Prostate gland (tissue), 2 donors: ENCODE measurements at regions of chrX and their contacts with region 1.

Region 1: DNA sequence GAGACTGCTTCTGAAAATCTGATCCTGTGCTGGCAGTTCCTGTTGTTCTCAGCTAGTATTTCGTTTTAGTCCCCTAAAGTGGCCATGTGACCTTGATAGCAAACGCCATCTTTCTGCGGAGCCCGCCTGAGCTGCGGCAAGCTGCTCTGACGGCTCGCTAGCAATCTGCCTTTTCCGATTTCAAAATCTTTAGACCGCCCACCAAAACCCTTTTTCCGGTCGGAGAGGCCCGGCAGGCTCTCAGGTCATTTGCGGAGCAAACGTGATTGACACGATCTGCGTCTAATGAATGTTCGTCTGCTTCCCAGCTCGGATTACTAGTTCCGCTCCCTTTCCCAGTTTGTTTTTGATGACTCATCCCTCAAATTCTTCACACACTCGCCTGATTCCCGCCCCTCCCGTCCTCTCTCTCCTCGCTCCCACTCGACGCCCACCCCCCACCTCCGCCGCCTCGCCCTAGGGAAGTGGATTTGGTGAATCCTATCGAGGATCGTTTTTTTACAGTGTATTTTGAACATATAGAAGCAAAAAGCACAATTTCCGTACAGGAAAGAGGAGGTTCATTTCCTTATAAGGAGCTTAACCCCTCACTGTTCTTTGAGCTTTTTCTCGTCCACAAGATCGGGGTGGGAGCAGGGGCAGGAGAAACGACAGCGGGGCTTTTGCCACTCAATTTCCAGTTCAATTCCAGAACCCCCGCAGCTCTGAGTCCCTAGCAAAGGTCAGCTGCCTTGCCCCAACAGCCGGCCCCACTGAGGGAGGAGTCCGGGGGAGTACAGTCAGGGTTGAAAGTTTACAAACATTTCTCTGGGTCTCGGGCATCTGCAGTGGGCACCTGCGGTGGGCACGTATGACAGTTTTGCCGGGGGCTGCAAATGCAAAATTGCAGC is 37.5 kb downstream of the NLGN3 start:
- DNase-seq: peak; percentile 88
- H3K4me3 ChIP-seq: peak overlapping the region; percentile 29 to 34
- H3K27ac ChIP-seq: peak overlapping the region; percentile 83 to 84
- H3K4me1 ChIP-seq: no peaks in the 10 kb centered on the region
- H3K27me3 ChIP-seq: no peaks in the 10 kb centered on the region
- CTCF ChIP-seq: no peak
- POLR2A ChIP-seq: peak; percentile 76

Region 2: DNA sequence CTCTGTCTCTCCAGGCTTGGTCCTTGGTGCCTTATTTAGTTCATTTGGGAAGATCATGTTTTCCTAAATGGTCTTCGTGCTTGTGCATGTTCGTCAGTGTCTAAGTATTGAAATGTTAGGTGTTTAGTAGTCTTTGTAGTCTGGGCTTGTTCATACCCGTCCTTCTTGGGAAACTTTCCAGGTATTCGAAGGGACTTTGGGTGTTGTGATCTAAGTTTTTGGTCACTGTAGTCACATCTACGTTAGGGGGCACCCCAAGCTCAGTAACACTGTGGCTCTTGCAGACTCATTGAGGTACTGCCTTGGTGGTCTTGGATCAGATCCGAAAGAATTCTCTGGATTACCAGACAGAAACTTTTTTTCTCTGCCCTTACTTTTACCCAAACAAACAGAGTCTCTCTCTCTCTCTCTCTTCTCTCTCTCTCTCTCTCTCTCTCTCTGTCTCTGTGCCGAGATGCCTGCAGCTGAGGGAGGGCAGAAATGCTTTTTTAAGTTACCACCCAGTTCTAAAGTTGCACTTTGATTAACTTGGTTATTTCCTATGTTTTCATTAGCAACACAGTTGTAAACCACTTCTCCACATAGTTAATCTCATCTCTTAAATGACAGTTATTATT is 183.6 kb before region 1 on chrX:
- intact Hi-C with region 1: loop called (anchors 5 kb)
- DNase-seq: peak; percentile 62
- H3K4me3 ChIP-seq: no peak overlapping the region
- H3K27ac ChIP-seq: no peak overlapping the region
- H3K4me1 ChIP-seq: no peaks in the 10 kb centered on the region
- H3K27me3 ChIP-seq: no peaks in the 10 kb centered on the region
- CTCF ChIP-seq: peak in 3 of 4 experiments; percentile 17 to 51 (median 49)
- POLR2A ChIP-seq: no peak

Region 3: GRCh38 chrX:71095543-71095911 is 86.6 kb before region 1 on chrX and contains the start of gene FOXO4:
- intact Hi-C with region 1: loop called (anchors 5 kb)
- DNase-seq: peak; percentile 90
- H3K4me3 ChIP-seq: peak within 1 kb of the TSS; percentile 43 to 47
- H3K27ac ChIP-seq: peak within 1 kb of the TSS; percentile 75
- H3K4me1 ChIP-seq: no peaks in the 10 kb centered on the region
- H3K27me3 ChIP-seq: no peaks in the 10 kb centered on the region
- CTCF ChIP-seq: no peak
- POLR2A ChIP-seq: no peak
- total RNA-seq, gene FOXO4: 40.4 to 74.0 TPM

Region 4: DNA sequence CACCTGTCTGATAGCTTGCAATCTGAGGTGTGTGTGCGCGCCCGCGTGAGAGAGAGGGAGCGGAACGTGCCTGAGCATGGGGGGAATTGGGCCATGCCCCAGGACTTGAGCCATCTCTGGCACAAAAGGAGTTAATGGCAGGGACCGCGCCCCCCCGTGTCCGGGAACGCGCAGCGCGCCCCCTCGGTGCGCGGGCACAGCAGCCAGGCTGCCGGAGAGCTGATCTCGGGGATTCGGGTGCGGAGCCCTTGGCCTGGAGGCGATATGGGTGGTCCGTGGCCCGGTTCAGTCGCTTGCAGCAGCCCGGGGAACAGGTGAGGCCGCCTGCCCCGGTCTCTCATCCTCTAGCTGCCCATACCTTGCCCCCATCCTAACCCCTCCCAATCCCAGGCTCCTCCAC is 37.5 kb before region 1 on chrX and contains the start of gene NLGN3:
- intact Hi-C with region 1: loop called (anchors 2 kb)
- DNase-seq: no peak
- H3K4me3 ChIP-seq: peak within 1 kb of the TSS in 1 of 2 donors; percentile 5
- H3K27ac ChIP-seq: no peak within 1 kb of the TSS
- H3K4me1 ChIP-seq: no peaks in the 10 kb centered on the region
- H3K27me3 ChIP-seq: no peaks in the 10 kb centered on the region
- CTCF ChIP-seq: no peak
- POLR2A ChIP-seq: no peak
- total RNA-seq, gene NLGN3: 1.4 to 9.4 TPM

Region 5: DNA sequence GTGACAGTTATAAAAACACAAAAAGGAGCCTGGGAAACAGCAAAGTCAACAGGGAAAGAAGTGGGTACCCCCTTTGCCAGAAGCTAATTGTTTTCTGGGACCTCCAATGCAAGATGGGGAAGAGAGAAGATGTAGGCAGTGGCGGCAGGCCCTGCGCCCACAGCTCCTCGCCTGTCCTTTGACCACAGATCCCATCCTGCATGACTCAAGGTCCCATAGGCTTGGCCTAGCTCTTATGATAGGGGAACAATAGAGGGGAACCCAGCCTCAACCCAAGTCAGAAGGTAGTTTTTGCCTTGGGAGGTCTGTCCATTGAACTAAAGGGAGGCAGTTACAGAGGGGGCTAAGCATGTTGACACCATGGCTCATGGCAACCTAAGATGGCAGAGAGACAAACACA is 57.6 kb after region 1 on chrX:
- intact Hi-C with region 1: loop called (anchors 10 kb)
- DNase-seq: no peak
- H3K4me3 ChIP-seq: no peak overlapping the region
- H3K27ac ChIP-seq: no peak overlapping the region
- H3K4me1 ChIP-seq: no peaks in the 10 kb centered on the region
- H3K27me3 ChIP-seq: no peaks in the 10 kb centered on the region
- CTCF ChIP-seq: no peak
- POLR2A ChIP-seq: no peak

Region 6: GRCh38 chrX:71577682-71578081 is 395.5 kb after region 1 on chrX:
- intact Hi-C with region 1: no loop called
- DNase-seq: no peak
- H3K4me3 ChIP-seq: no peak overlapping the region
- H3K27ac ChIP-seq: no peak overlapping the region
- H3K4me1 ChIP-seq: no peaks in the 10 kb centered on the region
- H3K27me3 ChIP-seq: no peaks in the 10 kb centered on the region
- CTCF ChIP-seq: no peak
- POLR2A ChIP-seq: no peak